GM12878 (cell line): ENCODE measurements at regions of chr16 and their contacts with region 1.

Region 1: GRCh38 chr16:636206-637080 is at the start of gene METTL26:
- DNase-seq: peak; percentile 68
- ATAC-seq: peak; percentile 92
- H3K4me3 ChIP-seq: peak within 1 kb of the TSS; percentile 88
- H3K27ac ChIP-seq: peak within 1 kb of the TSS; percentile 82
- H3K4me1 ChIP-seq: peaks cover 13% of the 10 kb centered on the region
- H3K27me3 ChIP-seq: no peaks in the 10 kb centered on the region
- CTCF ChIP-seq: peak in 1 of 3 experiments; percentile 12; a peak in 1 of 6 replicates
- EP300 ChIP-seq: peak in 1 of 2 experiments; percentile 66; a peak in 1 of 4 replicates
- POLR2A ChIP-seq: peak; percentile 88
- RAD21 ChIP-seq: no peak
- polyA plus RNA-seq, gene METTL26: 5.4 to 12.0 TPM

Region 2: DNA sequence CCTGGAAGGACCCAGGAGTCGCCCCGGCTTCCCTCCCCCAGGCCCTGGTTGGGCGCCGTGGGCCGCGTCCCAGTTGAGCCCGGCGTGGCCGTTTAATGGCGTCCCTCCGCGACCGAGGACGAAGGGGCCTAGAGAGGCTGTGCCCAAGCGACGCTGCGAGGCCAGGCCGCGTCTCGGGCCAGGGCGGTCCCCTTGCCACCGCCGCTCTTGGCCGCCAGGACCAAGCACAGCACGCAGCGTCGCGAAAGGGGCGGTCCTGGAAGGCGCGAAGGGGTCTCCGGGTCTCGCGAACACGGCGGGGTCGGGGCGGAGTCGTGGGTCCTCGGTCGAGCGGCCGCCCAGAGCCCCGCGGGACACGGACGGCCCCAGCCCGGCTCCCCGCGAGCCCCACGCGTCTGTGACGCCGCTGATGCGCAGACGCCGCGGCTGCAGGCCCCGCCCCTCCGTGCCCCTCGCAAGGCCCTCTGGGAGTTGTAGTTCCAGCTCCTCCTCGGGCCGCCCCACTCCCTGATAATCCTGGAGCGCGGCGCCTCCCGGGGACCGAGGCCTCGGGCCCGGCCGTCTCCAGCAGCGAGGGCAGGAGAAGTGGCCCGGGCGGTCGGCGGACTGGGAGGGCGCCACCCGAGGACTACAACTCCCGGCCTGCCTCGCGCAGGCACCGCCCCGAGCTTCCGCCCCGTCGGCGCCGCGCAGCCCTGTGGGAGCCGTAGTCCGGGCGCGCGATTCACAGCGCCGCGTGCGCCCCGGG is 109.3 kb before region 1 on chr16 and contains the start of gene CAPN15:
- CTCF ChIA-PET with region 1: no interaction called
- POLR2A ChIA-PET with region 1: interaction called, 3 read pairs
- RAD21 ChIA-PET with region 1: interaction called, 4 read pairs
- SMC1A ChIA-PET with region 1: no interaction called
- in situ Hi-C with region 1: no loop called
- intact Hi-C with region 1: loop called (anchors 5 kb)
- DNase-seq: peak; percentile 33
- ATAC-seq: peak; percentile 78
- H3K4me3 ChIP-seq: peak within 1 kb of the TSS; percentile 98
- H3K27ac ChIP-seq: peak within 1 kb of the TSS; percentile 91
- H3K4me1 ChIP-seq: peaks cover 29% of the 10 kb centered on the region
- H3K27me3 ChIP-seq: no peaks in the 10 kb centered on the region
- CTCF ChIP-seq: no peak
- EP300 ChIP-seq: no peak
- POLR2A ChIP-seq: peak; percentile 81
- RAD21 ChIP-seq: no peak
- polyA plus RNA-seq, gene CAPN15: 0.40 to 1.1 TPM

Region 3: GRCh38 chr16:589658-590159 is 46.7 kb before region 1 on chr16 and contains the start of gene RAB40C:
- CTCF ChIA-PET with region 1: no interaction called
- POLR2A ChIA-PET with region 1: interaction called, 5 read pairs
- RAD21 ChIA-PET with region 1: no interaction called
- SMC1A ChIA-PET with region 1: no interaction called
- in situ Hi-C with region 1: no loop called
- intact Hi-C with region 1: loop called (anchors 1 kb)
- DNase-seq: peak; percentile 82
- ATAC-seq: peak; percentile 92
- H3K4me3 ChIP-seq: peak within 1 kb of the TSS; percentile 94
- H3K27ac ChIP-seq: peak within 1 kb of the TSS; percentile 85
- H3K4me1 ChIP-seq: peaks cover 15% of the 10 kb centered on the region
- H3K27me3 ChIP-seq: no peaks in the 10 kb centered on the region
- CTCF ChIP-seq: peak in 2 of 3 experiments; percentile 8 to 21; a peak in 1 of 6 replicates
- EP300 ChIP-seq: no peak
- POLR2A ChIP-seq: no peak; the same call in 1 of the 2 replicates
- RAD21 ChIP-seq: no peak
- polyA plus RNA-seq, gene RAB40C: 0.06 to 0.35 TPM

Region 4: GRCh38 chr16:648781-649589 is 12.5 kb after region 1 on chr16 and contains the start of gene WDR90:
- CTCF ChIA-PET with region 1: interaction called, 11 read pairs
- POLR2A ChIA-PET with region 1: interaction called, 4 read pairs
- RAD21 ChIA-PET with region 1: interaction called, 13 read pairs
- SMC1A ChIA-PET with region 1: interaction called, 5 read pairs
- in situ Hi-C with region 1: no loop called
- intact Hi-C with region 1: no loop called
- DNase-seq: peak; percentile 61
- ATAC-seq: peak; percentile 93
- H3K4me3 ChIP-seq: peak within 1 kb of the TSS; percentile 70
- H3K27ac ChIP-seq: peak within 1 kb of the TSS; percentile 80
- H3K4me1 ChIP-seq: peaks cover 9% of the 10 kb centered on the region
- H3K27me3 ChIP-seq: no peaks in the 10 kb centered on the region
- CTCF ChIP-seq: no peak
- EP300 ChIP-seq: no peak
- POLR2A ChIP-seq: peak; percentile 84
- RAD21 ChIP-seq: no peak
- polyA plus RNA-seq, gene WDR90: 2.0 to 5.9 TPM

Region 5: DNA sequence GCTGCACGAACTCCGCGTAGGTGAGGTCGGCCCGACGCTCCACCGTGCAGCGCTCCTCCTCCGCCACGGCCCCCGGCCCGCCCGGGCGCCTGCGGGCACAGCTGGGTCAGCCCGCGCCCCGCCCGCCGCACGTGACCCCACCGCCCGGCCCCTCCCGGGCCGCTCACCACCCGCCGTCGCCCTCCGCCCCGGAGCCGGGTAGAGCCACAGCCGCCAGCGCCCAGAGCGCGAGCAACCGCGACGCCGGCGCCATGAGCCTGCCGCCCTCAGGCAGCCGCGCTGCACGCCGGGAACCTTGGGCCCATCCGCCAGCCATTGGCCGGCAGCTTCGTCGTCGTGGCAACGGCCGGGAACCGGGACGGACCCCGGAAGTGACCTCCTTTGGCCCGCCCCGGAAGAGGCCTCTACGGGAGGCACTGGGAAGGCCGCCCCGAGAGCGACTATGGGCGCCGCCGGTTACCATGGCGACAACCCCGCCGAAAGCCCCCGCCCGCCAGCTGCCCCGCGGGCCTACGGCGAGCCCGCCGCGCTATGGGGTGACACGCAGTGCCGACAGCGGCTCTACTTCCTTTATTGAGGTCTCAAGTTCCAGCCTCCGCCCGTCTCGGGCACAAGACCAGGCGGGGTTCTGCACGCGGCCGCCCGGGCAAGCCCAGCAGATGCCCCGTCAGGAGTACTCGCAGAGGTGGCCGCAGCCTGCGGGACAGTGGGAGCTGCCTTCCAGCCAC is 47.8 kb after region 1 on chr16 and contains the start of gene JMJD8:
- CTCF ChIA-PET with region 1: no interaction called
- POLR2A ChIA-PET with region 1: no interaction called
- RAD21 ChIA-PET with region 1: no interaction called
- SMC1A ChIA-PET with region 1: no interaction called
- in situ Hi-C with region 1: no loop called
- intact Hi-C with region 1: loop called (anchors 5 kb)
- DNase-seq: no peak
- ATAC-seq: peak; percentile 86
- H3K4me3 ChIP-seq: peak within 1 kb of the TSS; percentile 67
- H3K27ac ChIP-seq: peak within 1 kb of the TSS; percentile 44; the same call in 1 of the 2 replicates
- H3K4me1 ChIP-seq: peaks cover 16% of the 10 kb centered on the region
- H3K27me3 ChIP-seq: no peaks in the 10 kb centered on the region
- CTCF ChIP-seq: no peak
- EP300 ChIP-seq: no peak
- POLR2A ChIP-seq: peak; percentile 92
- RAD21 ChIP-seq: no peak
- polyA plus RNA-seq, gene JMJD8: 1.00 to 3.4 TPM